ENCODE measurements at regions of chr1 and their contacts with region 1.

Region 1: GRCh38 chr1:235045034-235045720 is 83.5 kb downstream of the TOMM20 start:
- H3K4me3 Mint-ChIP-seq: no peak overlapping the region
- H3K27ac Mint-ChIP-seq: peak overlapping the region; percentile 45
- H3K4me1 Mint-ChIP-seq: peaks cover 57% of the 10 kb centered on the region
- H3K27me3 Mint-ChIP-seq: no peaks in the 10 kb centered on the region

Region 2: GRCh38 chr1:234985516-234986294 is 59.5 kb before region 1 on chr1:
- intact Hi-C with region 1: loop called (anchors 2 kb)
- H3K4me3 Mint-ChIP-seq: no peak overlapping the region
- H3K27ac Mint-ChIP-seq: peak overlapping the region; percentile 88
- H3K4me1 Mint-ChIP-seq: peaks cover 74% of the 10 kb centered on the region
- H3K27me3 Mint-ChIP-seq: no peaks in the 10 kb centered on the region

Measured in dendritic cell treated with granulocyte-macrophage colony-stimulating factor and Interleukin-4, amounts not matched to agents 40 ng/mL and 50 ng/mL, for 4 days (primary cell).